ENCODE measurements at regions of chr5 and their contacts with region 1.

Region 1: GRCh38 chr5:139392678-139393496 is 2.0 kb downstream of the PROB1 start:
- DNase-seq: peak; percentile 52
- ATAC-seq: peak; percentile 89
- H3K4me3 ChIP-seq: peak overlapping the region; percentile 62 to 75
- H3K27ac ChIP-seq: peak overlapping the region; percentile 85
- H3K4me1 ChIP-seq: peaks cover 27% of the 10 kb centered on the region
- H3K27me3 ChIP-seq: no peaks in the 10 kb centered on the region
- CTCF ChIP-seq: peak; percentile 97

Region 2: DNA sequence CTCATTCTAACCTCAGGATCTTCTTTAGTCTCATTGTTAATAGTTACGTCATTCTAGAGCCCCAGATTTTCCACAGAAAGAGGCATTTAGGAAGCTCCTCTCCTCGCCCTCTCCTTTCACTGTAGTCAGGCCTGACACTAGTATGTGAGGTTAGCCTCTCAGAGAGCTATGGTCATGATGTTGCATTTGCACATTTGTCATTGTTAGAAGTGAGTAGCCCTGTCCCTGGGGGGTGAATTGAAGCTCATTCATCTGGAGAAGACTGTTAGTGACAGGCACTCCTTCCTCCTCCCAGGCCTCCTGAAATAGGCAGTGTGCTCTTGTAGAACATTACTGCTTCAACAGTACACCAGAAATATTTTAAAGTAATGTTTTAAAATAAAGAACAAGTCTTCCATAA is 491.2 kb before region 1 on chr5:
- CTCF ChIA-PET with region 1: no interaction called
- POLR2A ChIA-PET with region 1: interaction called, 10 read pairs
- in situ Hi-C with region 1: no loop called
- intact Hi-C with region 1: no loop called
- DNase-seq: no peak
- ATAC-seq: no peak
- H3K4me3 ChIP-seq: no peak overlapping the region
- H3K27ac ChIP-seq: no peak overlapping the region
- H3K4me1 ChIP-seq: no peaks in the 10 kb centered on the region
- H3K27me3 ChIP-seq: no peaks in the 10 kb centered on the region
- CTCF ChIP-seq: no peak

Region 3: GRCh38 chr5:139287890-139288635 is 104.8 kb before region 1 on chr5:
- CTCF ChIA-PET with region 1: no interaction called
- POLR2A ChIA-PET with region 1: no interaction called
- in situ Hi-C with region 1: no loop called
- intact Hi-C with region 1: loop called (anchors 10 kb)
- DNase-seq: no peak
- ATAC-seq: peak; percentile 58
- H3K4me3 ChIP-seq: no peak overlapping the region
- H3K27ac ChIP-seq: no peak overlapping the region
- H3K4me1 ChIP-seq: 0 out of 2 replicates have a peak, but pooled peaks cover 1% of the 10 kb centered on the region
- H3K27me3 ChIP-seq: no peaks in the 10 kb centered on the region
- CTCF ChIP-seq: no peak; the same call in 1 of the 2 replicates

Region 4: DNA sequence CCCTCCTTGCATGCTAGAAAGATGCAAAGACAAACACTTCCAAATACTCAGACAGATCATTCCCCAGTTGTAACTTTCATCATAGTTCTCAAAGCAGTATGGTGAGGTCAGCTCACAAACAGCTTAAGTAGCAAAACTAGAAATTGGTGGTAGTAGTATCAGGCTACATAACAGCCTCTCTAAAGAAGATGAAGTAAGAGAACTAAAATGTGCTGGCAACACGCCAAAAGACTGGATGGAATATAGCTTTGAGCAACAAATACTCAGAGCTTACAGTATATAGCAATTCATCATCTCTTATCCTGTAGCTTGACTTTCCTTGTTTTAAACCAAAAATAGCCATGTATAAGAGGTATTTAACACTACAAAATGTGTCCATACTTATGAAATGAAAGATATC is 902.5 kb after region 1 on chr5:
- CTCF ChIA-PET with region 1: no interaction called
- POLR2A ChIA-PET with region 1: no interaction called
- in situ Hi-C with region 1: no loop called
- intact Hi-C with region 1: no loop called
- DNase-seq: no peak
- ATAC-seq: peak; percentile 58; the same call in 1 of the 2 replicates
- H3K4me3 ChIP-seq: no peak overlapping the region
- H3K27ac ChIP-seq: no peak overlapping the region
- H3K4me1 ChIP-seq: peaks cover 45% of the 10 kb centered on the region
- H3K27me3 ChIP-seq: no peaks in the 10 kb centered on the region
- CTCF ChIP-seq: no peak